Activated CD4-positive, alpha-beta T cell treated with anti-CD3 and anti-CD28 coated beads, Interleukin-2, amount 10 ng/mL, durations not matched to agents 24 days and 14 days (primary cell): ENCODE measurements at regions of chr5 and their contacts with region 1.

Region 1: GRCh38 chr5:136435946-136436544 is 70.7 kb upstream of the TRPC7 start:
- DNase-seq: no peak
- H3K4me3 Mint-ChIP-seq: no peak overlapping the region
- H3K27ac Mint-ChIP-seq: no peak overlapping the region
- H3K4me1 Mint-ChIP-seq: no peaks in the 10 kb centered on the region
- H3K27me3 Mint-ChIP-seq: no peaks in the 10 kb centered on the region

Region 2: DNA sequence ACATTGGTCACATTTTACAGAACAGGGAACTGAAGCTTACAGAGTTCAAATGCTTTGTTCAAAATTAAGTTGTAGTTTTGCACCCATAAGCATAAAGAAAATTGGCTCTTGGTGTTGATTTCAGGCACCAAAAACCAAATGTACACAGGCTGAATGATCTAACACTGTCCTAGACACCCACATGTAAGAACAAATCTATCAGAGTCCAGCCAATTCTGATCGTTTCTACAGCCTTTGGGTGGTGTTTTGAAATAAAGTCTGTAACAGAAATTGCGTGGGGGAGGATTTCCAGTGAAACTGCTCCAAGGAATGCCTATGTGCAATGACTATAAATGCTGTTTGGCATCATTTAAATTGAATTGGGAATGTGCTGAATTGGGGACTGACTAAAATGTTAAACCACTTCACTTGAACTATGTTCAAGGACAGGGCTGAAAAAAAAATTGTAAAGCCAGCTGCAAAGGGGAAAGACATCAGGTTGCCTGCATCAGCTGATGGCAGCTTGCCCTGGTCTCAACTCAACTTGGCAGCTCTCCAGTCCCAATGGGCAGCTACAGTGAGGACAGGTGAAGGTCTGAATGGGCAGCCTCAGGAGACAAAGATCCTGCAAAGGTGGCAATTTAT is 21.5 kb after region 1 on chr5:
- intact Hi-C with region 1: no loop called
- DNase-seq: no peak
- H3K4me3 Mint-ChIP-seq: no peak overlapping the region
- H3K27ac Mint-ChIP-seq: no peak overlapping the region
- H3K4me1 Mint-ChIP-seq: no peaks in the 10 kb centered on the region
- H3K27me3 Mint-ChIP-seq: no peaks in the 10 kb centered on the region

Region 3: DNA sequence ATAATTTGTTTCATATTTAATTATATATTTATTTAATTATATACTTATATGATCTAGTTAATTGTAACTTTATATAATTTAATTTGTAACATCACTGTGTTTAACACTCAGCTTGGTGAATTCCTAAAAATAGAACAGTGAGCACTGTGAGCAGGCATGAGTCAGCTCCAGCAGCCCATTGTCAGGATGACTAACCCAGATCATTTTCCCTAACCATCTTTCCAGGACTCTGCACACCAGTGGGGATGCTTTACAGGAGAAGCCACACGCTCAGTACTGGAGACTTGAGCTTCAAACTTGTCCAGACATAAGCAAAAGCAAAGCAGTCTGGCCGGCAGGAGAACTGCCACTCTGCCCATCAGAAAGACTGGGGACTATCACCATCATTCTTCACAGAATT is 375.5 kb after region 1 on chr5:
- intact Hi-C with region 1: loop called (anchors 5 kb)
- DNase-seq: no peak
- H3K4me3 Mint-ChIP-seq: no peak overlapping the region
- H3K27ac Mint-ChIP-seq: no peak overlapping the region
- H3K4me1 Mint-ChIP-seq: peaks cover 2% of the 10 kb centered on the region
- H3K27me3 Mint-ChIP-seq: no peaks in the 10 kb centered on the region